GM12878 (cell line): ENCODE measurements at regions of chr21 and their contacts with region 1.

Region 1: DNA sequence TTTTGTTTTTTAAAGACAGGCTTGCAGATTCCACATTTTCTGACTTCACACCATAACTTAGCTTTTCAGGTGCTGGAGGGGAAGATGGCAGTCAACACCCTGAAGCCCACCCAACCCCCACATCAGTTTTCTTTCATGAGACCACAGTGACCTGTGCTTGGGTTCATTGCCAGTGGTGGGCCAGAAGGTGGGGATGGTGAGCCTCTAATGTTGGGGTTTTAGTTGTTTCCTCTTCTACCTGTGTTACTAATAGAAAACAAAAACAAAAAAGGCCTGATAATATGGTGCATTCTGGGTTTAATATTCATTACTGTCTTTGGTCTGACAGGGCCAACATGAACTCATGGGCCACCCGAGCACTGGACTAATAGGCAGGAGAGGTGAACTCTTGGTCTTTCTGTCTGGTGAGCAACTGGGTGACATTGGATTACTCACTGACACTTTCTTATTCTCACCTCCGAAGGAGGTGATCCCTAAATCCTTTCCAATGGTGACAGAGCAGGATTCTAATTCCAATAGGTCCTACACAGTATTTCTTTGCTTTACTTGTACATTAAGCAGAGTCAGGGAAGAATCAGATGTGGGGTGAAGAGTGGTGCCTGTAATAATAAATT is 132.8 kb downstream of the CLIC6 start:
- DNase-seq: no peak
- ATAC-seq: peak; percentile 80
- H3K4me3 ChIP-seq: no peak overlapping the region
- H3K27ac ChIP-seq: no peak overlapping the region
- H3K4me1 ChIP-seq: peaks cover 9% of the 10 kb centered on the region; the same call in 1 of the 2 replicates
- H3K27me3 ChIP-seq: no peaks in the 10 kb centered on the region
- CTCF ChIP-seq: peak; percentile 66 to 73 (median 72)
- EP300 ChIP-seq: no peak
- POLR2A ChIP-seq: no peak
- RAD21 ChIP-seq: peak; percentile 84

Region 2: DNA sequence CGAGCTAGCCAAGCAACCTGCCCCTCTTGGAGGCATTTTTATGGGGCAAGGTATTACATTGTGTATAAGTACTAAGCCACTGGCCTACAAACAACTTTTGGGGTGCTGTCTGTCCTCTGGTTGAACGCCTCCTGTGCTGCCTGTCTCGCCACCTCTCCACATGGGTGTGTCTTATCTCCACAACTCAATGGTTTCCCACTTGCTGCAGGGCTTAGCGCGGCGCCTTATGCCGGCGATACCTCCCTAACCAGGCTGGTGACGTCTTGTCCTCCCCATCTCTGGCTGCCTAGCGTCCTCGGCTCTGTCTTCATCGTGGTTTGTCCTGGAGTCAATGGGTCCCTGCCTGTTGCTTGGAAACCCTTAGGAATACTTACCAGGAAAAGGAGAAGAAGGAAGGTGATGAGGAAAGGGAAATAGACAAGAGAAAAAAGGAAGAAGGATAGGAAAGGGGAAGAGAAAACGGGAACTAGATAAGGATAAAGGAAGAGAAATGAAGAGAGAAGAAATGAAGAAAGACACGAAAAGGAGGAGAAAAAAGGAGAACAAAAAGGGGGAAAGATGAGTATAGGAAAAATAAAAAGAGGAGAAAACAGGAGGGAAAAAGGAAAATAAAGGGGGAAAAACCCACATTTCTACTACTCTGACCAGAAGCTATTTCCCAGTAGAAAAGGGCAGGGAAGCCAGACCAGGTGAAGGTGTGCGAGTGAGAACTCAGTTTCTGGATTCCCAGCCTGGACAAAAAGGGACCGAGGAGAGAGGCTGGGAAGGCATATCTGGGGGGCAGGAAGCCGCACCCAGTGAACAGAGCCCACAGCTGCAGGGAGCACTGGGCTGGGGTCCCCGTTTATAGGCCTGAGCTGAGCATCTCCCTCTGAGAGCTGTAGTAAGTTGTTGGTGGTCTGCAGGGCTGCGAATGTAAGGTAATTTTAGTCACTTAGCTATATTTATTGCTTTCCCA is 46.7 kb before region 1 on chr21:
- CTCF ChIA-PET with region 1: no interaction called
- POLR2A ChIA-PET with region 1: no interaction called
- RAD21 ChIA-PET with region 1: no interaction called
- SMC1A ChIA-PET with region 1: no interaction called
- in situ Hi-C with region 1: no loop called
- intact Hi-C with region 1: no loop called
- DNase-seq: no peak
- ATAC-seq: no peak
- H3K4me3 ChIP-seq: no peak overlapping the region
- H3K27ac ChIP-seq: no peak overlapping the region
- H3K4me1 ChIP-seq: no peaks in the 10 kb centered on the region
- H3K27me3 ChIP-seq: no peaks in the 10 kb centered on the region; a peak in 3 of 4 replicates
- CTCF ChIP-seq: no peak
- EP300 ChIP-seq: no peak
- POLR2A ChIP-seq: no peak
- RAD21 ChIP-seq: no peak

Region 3: GRCh38 chr21:34826836-34827235 is 25.2 kb after region 1 on chr21:
- CTCF ChIA-PET with region 1: no interaction called
- POLR2A ChIA-PET with region 1: no interaction called
- RAD21 ChIA-PET with region 1: no interaction called
- SMC1A ChIA-PET with region 1: no interaction called
- in situ Hi-C with region 1: no loop called
- intact Hi-C with region 1: no loop called
- DNase-seq: no peak
- ATAC-seq: no peak
- H3K4me3 ChIP-seq: no peak overlapping the region
- H3K27ac ChIP-seq: no peak overlapping the region
- H3K4me1 ChIP-seq: no peaks in the 10 kb centered on the region
- H3K27me3 ChIP-seq: no peaks in the 10 kb centered on the region
- CTCF ChIP-seq: no peak
- EP300 ChIP-seq: no peak
- POLR2A ChIP-seq: no peak
- RAD21 ChIP-seq: no peak

Region 4: DNA sequence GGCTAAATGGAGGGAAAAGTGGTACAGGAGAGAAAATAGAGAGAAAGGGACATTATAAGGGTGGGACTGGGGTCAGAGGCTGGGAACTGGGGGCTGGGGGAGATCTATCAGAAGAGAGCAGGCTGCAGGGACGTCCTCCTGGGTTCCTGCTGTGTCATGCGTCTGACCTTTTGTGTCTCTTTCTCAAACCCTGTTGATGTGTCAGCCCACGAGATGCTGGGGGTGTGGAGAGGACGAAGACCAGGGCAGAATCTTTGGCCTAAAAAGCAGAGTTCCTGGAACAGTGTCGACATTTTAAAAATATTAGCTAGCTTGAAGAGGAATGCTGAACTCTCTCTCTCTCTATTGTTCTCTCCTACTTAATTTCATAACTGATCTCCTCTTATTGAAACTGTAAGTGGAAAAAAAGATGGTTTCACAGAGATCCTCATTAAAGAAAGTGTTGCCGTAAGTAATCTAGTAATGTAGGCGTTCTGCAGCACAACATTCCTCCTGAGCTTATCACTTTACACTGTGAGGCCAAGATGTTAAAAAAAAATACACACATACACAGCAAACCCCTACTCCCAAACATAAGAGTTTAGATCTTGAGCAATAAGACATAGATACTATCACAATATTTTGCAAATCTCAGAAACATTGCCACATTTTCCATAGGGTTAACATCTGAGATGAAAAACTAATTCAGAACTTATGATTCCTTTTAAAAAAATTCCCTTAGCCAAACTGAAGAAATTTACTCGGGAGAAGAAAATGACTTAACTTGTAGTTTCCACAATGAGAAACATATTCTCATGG is 194.9 kb after region 1 on chr21:
- CTCF ChIA-PET with region 1: no interaction called
- POLR2A ChIA-PET with region 1: no interaction called
- RAD21 ChIA-PET with region 1: no interaction called
- SMC1A ChIA-PET with region 1: no interaction called
- in situ Hi-C with region 1: no loop called
- intact Hi-C with region 1: no loop called
- DNase-seq: no peak
- ATAC-seq: no peak
- H3K4me3 ChIP-seq: no peak overlapping the region
- H3K27ac ChIP-seq: no peak overlapping the region
- H3K4me1 ChIP-seq: peaks cover 4% of the 10 kb centered on the region; the same call in 1 of the 2 replicates
- H3K27me3 ChIP-seq: no peaks in the 10 kb centered on the region; a peak in 1 of 4 replicates
- CTCF ChIP-seq: no peak
- EP300 ChIP-seq: no peak
- POLR2A ChIP-seq: no peak
- RAD21 ChIP-seq: no peak

Region 5: DNA sequence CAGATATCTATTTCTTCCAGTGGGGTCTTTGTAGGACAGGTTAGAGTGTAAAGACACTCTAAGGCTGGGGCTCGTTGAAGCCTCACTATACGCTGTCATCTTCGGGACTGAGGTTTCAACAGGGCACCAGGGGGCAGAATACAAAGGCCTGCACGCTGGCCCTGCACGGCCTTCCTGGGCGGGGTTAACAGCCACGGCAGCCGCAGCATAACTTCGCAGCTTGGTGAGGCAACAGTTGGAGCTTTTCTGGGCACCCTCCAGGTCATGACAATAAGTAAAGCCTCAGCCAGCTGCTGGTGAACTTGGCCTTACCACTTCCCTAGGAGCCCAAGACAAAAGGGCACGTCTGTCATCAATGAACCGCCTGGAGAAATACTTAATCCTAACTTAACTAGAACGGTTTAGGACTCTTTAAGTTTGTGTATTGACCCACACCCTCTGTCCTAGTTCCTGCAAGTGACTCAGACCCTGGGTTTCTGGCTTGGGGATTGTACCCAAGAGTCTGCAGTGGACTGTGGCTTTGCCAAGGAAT is 249.7 kb after region 1 on chr21:
- CTCF ChIA-PET with region 1: no interaction called
- POLR2A ChIA-PET with region 1: no interaction called
- RAD21 ChIA-PET with region 1: no interaction called
- SMC1A ChIA-PET with region 1: interaction called, 3 read pairs
- in situ Hi-C with region 1: no loop called
- intact Hi-C with region 1: loop called (anchors 5 kb)
- DNase-seq: no peak
- ATAC-seq: peak; percentile 34; the same call in 2 of the 3 replicates
- H3K4me3 ChIP-seq: no peak overlapping the region
- H3K27ac ChIP-seq: peak overlapping the region; percentile 23; the same call in 1 of the 2 replicates
- H3K4me1 ChIP-seq: peaks cover 41% of the 10 kb centered on the region
- H3K27me3 ChIP-seq: peaks cover 0 to 1% of the 10 kb centered on the region in 2 experiments; a peak in 1 of 4 replicates
- CTCF ChIP-seq: peak; percentile 16 to 32 (median 31); a peak in 4 of 6 replicates
- EP300 ChIP-seq: no peak
- POLR2A ChIP-seq: no peak
- RAD21 ChIP-seq: peak; percentile 69

Region 6: GRCh38 chr21:35400233-35400957 is 598.8 kb after region 1 on chr21:
- CTCF ChIA-PET with region 1: interaction called, 6 read pairs
- POLR2A ChIA-PET with region 1: no interaction called
- RAD21 ChIA-PET with region 1: interaction called, 6 read pairs
- SMC1A ChIA-PET with region 1: interaction called, 3 read pairs
- in situ Hi-C with region 1: no loop called
- intact Hi-C with region 1: loop called (anchors 2 kb)
- DNase-seq: peak; percentile 19
- ATAC-seq: peak; percentile 71
- H3K4me3 ChIP-seq: no peak overlapping the region
- H3K27ac ChIP-seq: no peak overlapping the region
- H3K4me1 ChIP-seq: no peaks in the 10 kb centered on the region
- H3K27me3 ChIP-seq: peaks cover 0 to 3% of the 10 kb centered on the region in 2 experiments; a peak in 3 of 4 replicates
- CTCF ChIP-seq: peak; percentile 35 to 72 (median 53); a peak in 5 of 6 replicates
- EP300 ChIP-seq: no peak
- POLR2A ChIP-seq: no peak
- RAD21 ChIP-seq: peak; percentile 92

Region 7: GRCh38 chr21:35840197-35840799 is 1038.7 kb after region 1 on chr21:
- CTCF ChIA-PET with region 1: interaction called, 3 read pairs
- POLR2A ChIA-PET with region 1: no interaction called
- RAD21 ChIA-PET with region 1: interaction called, 3 read pairs
- SMC1A ChIA-PET with region 1: interaction called, 7 read pairs
- in situ Hi-C with region 1: no loop called
- intact Hi-C with region 1: loop called (anchors 1 kb)
- DNase-seq: no peak
- ATAC-seq: peak; percentile 76
- H3K4me3 ChIP-seq: no peak overlapping the region
- H3K27ac ChIP-seq: no peak overlapping the region
- H3K4me1 ChIP-seq: no peaks in the 10 kb centered on the region
- H3K27me3 ChIP-seq: peaks cover 0 to 1% of the 10 kb centered on the region in 2 experiments; a peak in 1 of 4 replicates
- CTCF ChIP-seq: peak; percentile 73 to 76 (median 74)
- EP300 ChIP-seq: no peak
- POLR2A ChIP-seq: no peak
- RAD21 ChIP-seq: peak; percentile 87